Activated naive CD4-positive, alpha-beta T cell treated with anti-CD3 and anti-CD28 coated beads, Interleukin-2, amount 10 ng/mL, durations not matched to agents 7 days and 5 days (primary cell): ENCODE measurements at regions of chr16 and their contacts with region 1.

Region 1: DNA sequence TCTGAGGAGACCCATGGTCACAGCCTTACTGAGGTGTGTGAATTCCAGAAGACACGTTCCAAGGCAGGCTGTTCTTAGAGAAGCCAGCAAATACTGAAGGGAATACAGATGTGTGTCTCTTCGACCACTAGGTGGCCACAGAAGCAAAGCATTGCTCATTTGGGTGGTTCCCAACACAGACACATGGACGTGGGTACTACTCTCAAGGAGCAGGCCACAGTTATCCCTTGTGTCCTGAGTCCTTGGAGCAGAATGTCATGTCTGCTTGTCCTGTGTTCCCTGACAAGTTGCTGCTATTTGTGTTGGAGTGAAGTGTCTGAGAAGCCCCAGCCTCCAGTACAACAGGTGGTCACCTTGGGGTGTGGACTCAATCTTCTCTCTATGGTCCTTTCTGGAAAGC is 30.3 kb downstream of the HMOX2 start:
- DNase-seq: peak; percentile 76
- H3K4me3 Mint-ChIP-seq: peak overlapping the region; percentile 61
- H3K27ac Mint-ChIP-seq: peak overlapping the region; percentile 95
- H3K4me1 Mint-ChIP-seq: peaks cover 63% of the 10 kb centered on the region
- H3K27me3 Mint-ChIP-seq: no peaks in the 10 kb centered on the region

Region 2: DNA sequence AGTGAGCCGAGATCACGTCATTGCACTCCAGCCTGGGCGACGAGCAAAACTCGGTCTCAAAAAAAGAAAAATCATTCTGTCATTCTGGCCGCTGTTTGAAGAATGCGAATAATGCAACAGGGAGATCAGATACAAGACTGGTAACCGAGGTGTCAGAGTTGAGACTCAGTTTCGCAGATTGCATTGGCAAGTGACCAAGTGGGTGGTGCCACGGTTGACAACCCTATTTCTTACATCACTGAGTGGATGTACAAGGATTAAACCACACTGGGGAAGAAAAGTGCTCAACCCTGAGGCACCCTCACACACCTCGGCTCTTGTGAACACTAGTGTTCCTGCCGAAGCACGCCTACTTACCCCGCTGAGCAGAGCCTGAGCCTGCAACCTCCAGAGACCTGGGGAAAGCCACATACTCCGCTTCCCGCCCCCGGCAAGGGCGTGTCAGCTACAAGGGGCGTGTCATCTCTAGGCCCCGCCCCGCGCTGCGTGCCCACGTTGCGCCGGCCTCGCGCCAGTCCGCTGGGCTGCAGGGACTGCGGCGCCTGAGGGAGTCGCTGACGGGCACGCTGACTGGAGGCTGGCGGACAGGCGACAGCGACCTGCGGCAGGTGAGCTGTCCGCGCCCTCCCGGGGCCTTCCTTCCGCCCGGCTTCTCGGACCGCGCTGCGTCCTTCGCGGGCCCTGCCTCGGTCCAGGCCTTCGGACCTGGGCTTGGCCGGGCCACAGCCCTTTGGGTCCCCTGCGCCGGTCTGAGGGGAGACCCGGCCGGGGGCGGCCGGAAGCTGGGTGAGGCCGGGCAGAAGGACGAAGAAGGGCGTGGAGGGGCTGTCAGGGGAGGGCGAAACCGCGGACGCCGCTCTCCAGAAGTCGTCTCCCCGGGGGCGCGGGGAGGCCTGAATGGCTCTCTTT is 30.3 kb before region 1 on chr16 and contains the start of gene HMOX2:
- CTCF ChIA-PET with region 1: interaction called, 67 read pairs
- DNase-seq: peak; percentile 94
- H3K4me3 Mint-ChIP-seq: peak within 1 kb of the TSS; percentile 92
- H3K27ac Mint-ChIP-seq: peak within 1 kb of the TSS; percentile 91
- H3K4me1 Mint-ChIP-seq: peaks cover 49% of the 10 kb centered on the region
- H3K27me3 Mint-ChIP-seq: no peaks in the 10 kb centered on the region

Region 3: DNA sequence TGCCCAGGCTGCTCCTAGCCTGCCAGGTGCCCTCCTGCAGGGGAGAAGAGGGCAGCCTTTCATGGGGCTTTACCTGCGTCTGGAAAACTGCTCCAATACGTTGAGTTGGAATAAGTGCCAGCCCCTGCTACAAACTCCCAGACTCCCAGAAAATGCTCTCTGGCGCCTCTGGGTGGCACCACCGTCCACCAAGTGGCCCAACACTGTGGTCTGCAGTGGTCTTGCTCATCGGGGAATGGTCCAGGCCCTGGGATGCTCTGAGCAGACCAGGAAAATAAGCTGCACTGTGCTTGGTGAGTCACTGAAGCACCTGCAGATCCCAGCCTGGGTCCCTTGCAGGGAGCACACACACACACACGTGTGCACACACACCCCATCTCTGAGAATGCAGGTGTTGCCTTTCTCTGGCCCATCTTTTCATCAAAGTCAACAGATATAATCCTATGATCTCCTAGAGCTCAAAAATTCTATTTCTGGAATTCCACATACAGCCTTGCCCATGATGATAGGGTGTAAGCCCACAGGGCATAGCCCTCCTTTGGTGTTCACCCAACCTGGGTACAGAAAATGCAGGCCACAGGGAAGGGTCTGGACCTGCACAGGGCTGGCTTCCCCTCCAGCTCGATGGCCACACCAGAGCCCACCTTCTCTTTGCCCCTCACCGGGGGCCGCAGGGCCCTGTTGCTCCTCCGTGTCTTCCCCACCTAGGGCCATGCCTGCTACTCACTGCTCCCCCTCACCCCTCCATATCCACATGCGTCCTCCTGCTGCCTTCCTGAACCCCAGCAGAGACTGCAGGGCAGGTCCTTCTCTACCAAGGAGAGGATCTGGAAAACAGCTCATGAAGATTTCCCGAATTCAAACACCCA is 11.6 kb after region 1 on chr16:
- CTCF ChIA-PET with region 1: interaction called, 19 read pairs
- DNase-seq: no peak
- H3K4me3 Mint-ChIP-seq: no peak overlapping the region
- H3K27ac Mint-ChIP-seq: no peak overlapping the region
- H3K4me1 Mint-ChIP-seq: peaks cover 40% of the 10 kb centered on the region
- H3K27me3 Mint-ChIP-seq: no peaks in the 10 kb centered on the region

Region 4: GRCh38 chr16:4544473-4544872 is 38.0 kb after region 1 on chr16:
- CTCF ChIA-PET with region 1: interaction called, 80 read pairs
- DNase-seq: no peak
- H3K4me3 Mint-ChIP-seq: no peak overlapping the region
- H3K27ac Mint-ChIP-seq: no peak overlapping the region
- H3K4me1 Mint-ChIP-seq: peaks cover 10% of the 10 kb centered on the region
- H3K27me3 Mint-ChIP-seq: peaks cover 26% of the 10 kb centered on the region

Region 5: GRCh38 chr16:4624015-4624826 is 117.8 kb after region 1 on chr16 and contains the start of gene MGRN1:
- CTCF ChIA-PET with region 1: interaction called, 13 read pairs
- DNase-seq: peak; percentile 96
- H3K4me3 Mint-ChIP-seq: peak within 1 kb of the TSS; percentile 98
- H3K27ac Mint-ChIP-seq: peak within 1 kb of the TSS; percentile 98
- H3K4me1 Mint-ChIP-seq: peaks cover 40% of the 10 kb centered on the region
- H3K27me3 Mint-ChIP-seq: no peaks in the 10 kb centered on the region

Region 6: GRCh38 chr16:4693296-4693955 is 187.0 kb after region 1 on chr16 and contains the start of gene NUDT16L1:
- CTCF ChIA-PET with region 1: no interaction called
- DNase-seq: peak; percentile 97
- H3K4me3 Mint-ChIP-seq: peak within 1 kb of the TSS; percentile 81
- H3K27ac Mint-ChIP-seq: peak within 1 kb of the TSS; percentile 88
- H3K4me1 Mint-ChIP-seq: peaks cover 16% of the 10 kb centered on the region
- H3K27me3 Mint-ChIP-seq: no peaks in the 10 kb centered on the region